ENCODE measurements at regions of chr20 and their contacts with region 1.

Region 1: GRCh38 chr20:50509935-50510705 is at the start of gene PTPN1:
- DNase-seq: peak; percentile 99
- H3K4me3 Mint-ChIP-seq: peak within 1 kb of the TSS; percentile 86
- H3K27ac Mint-ChIP-seq: peak within 1 kb of the TSS; percentile 87
- H3K4me1 Mint-ChIP-seq: peaks cover 39% of the 10 kb centered on the region
- H3K27me3 Mint-ChIP-seq: no peaks in the 10 kb centered on the region
- total RNA-seq, gene PTPN1: 80.6 to 83.4 TPM

Region 2: GRCh38 chr20:50478162-50479036 is 31.7 kb before region 1 on chr20:
- CTCF ChIA-PET with region 1: interaction called, 7 read pairs
- POLR2A ChIA-PET with region 1: interaction called, 16 read pairs
- intact Hi-C with region 1: loop called (anchors 1 kb)
- DNase-seq: peak; percentile 89
- H3K4me3 Mint-ChIP-seq: no peak overlapping the region
- H3K27ac Mint-ChIP-seq: no peak overlapping the region
- H3K4me1 Mint-ChIP-seq: peaks cover 37% of the 10 kb centered on the region
- H3K27me3 Mint-ChIP-seq: no peaks in the 10 kb centered on the region

Region 3: GRCh38 chr20:50484276-50484976 is 25.7 kb before region 1 on chr20:
- CTCF ChIA-PET with region 1: interaction called, 7 read pairs
- POLR2A ChIA-PET with region 1: interaction called, 16 read pairs
- intact Hi-C with region 1: loop called (anchors 1 kb)
- DNase-seq: no peak
- H3K4me3 Mint-ChIP-seq: peak overlapping the region; percentile 82
- H3K27ac Mint-ChIP-seq: peak overlapping the region; percentile 93
- H3K4me1 Mint-ChIP-seq: peaks cover 38% of the 10 kb centered on the region
- H3K27me3 Mint-ChIP-seq: no peaks in the 10 kb centered on the region

Region 4: GRCh38 chr20:50491926-50492634 is 18.0 kb before region 1 on chr20:
- CTCF ChIA-PET with region 1: interaction called, 7 read pairs
- POLR2A ChIA-PET with region 1: interaction called, 9 read pairs
- intact Hi-C with region 1: loop called (anchors 1 kb)
- DNase-seq: no peak
- H3K4me3 Mint-ChIP-seq: no peak overlapping the region
- H3K27ac Mint-ChIP-seq: peak overlapping the region; percentile 88
- H3K4me1 Mint-ChIP-seq: peaks cover 38% of the 10 kb centered on the region
- H3K27me3 Mint-ChIP-seq: no peaks in the 10 kb centered on the region

Region 5: GRCh38 chr20:50546729-50547314 is 36.7 kb after region 1 on chr20:
- CTCF ChIA-PET with region 1: interaction called, 12 read pairs
- POLR2A ChIA-PET with region 1: interaction called, 12 read pairs
- intact Hi-C with region 1: no loop called
- DNase-seq: peak; percentile 53
- H3K4me3 Mint-ChIP-seq: peak overlapping the region; percentile 73
- H3K27ac Mint-ChIP-seq: peak overlapping the region; percentile 80
- H3K4me1 Mint-ChIP-seq: peaks cover 67% of the 10 kb centered on the region
- H3K27me3 Mint-ChIP-seq: no peaks in the 10 kb centered on the region

Region 6: DNA sequence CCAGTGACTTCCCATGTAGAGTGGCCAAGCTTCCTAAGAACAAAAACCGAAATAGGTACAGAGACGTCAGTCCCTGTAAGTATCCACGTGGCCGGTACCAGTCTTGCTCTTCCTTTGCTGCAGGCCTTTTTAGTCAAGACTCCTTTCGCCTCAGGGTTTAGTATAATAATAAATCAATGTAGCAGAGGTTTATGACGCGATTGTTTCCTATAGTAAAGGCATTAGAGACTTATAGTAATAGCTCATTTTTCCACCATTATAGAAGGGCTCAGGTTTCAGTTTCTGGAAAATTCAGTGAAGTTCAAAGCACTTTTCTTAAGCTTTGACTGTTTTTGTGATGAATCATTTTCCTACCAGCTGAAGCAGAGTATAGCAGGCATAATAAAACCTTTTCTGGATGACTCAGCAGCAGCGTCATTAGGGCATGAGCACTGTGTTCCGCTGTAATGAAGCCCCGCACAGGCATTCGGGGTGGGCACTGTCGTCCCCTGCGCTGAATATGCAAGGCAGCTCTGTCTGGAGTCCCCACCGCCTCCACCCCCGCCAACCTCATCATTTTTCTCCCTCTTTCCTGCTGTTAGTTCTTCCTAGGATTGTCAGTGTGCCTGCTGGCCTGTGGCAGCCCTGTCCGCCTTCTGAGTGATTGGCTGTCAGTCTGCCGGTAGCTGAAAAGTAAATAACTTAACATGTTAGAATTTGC is 51.4 kb after region 1 on chr20:
- CTCF ChIA-PET with region 1: interaction called, 9 read pairs
- POLR2A ChIA-PET with region 1: interaction called, 21 read pairs
- intact Hi-C with region 1: loop called (anchors 1 kb)
- DNase-seq: peak; percentile 86
- H3K4me3 Mint-ChIP-seq: peak overlapping the region; percentile 82
- H3K27ac Mint-ChIP-seq: peak overlapping the region; percentile 97
- H3K4me1 Mint-ChIP-seq: peaks cover 88% of the 10 kb centered on the region
- H3K27me3 Mint-ChIP-seq: no peaks in the 10 kb centered on the region

Region 7: GRCh38 chr20:50575847-50576720 is 66.0 kb after region 1 on chr20:
- CTCF ChIA-PET with region 1: interaction called, 38 read pairs
- POLR2A ChIA-PET with region 1: interaction called, 3 read pairs
- intact Hi-C with region 1: no loop called
- DNase-seq: peak; percentile 78
- H3K4me3 Mint-ChIP-seq: no peak overlapping the region
- H3K27ac Mint-ChIP-seq: peak overlapping the region; percentile 38
- H3K4me1 Mint-ChIP-seq: peaks cover 47% of the 10 kb centered on the region
- H3K27me3 Mint-ChIP-seq: no peaks in the 10 kb centered on the region